ENCODE measurements at regions of chr13 and their contacts with region 1.

Region 1: GRCh38 chr13:110506859-110507566 is 54.5 kb downstream of the RAB20 start:
- DNase-seq: peak; percentile 61 to 78
- H3K4me3 ChIP-seq: no peak overlapping the region
- H3K27ac ChIP-seq: peak overlapping the region; percentile 63 to 69
- H3K4me1 ChIP-seq: peaks cover 0 to 3% of the 10 kb centered on the region in 2 donors
- H3K27me3 ChIP-seq: no peaks in the 10 kb centered on the region
- CTCF ChIP-seq: no peak
- POLR2A ChIP-seq: no peak

Region 2: DNA sequence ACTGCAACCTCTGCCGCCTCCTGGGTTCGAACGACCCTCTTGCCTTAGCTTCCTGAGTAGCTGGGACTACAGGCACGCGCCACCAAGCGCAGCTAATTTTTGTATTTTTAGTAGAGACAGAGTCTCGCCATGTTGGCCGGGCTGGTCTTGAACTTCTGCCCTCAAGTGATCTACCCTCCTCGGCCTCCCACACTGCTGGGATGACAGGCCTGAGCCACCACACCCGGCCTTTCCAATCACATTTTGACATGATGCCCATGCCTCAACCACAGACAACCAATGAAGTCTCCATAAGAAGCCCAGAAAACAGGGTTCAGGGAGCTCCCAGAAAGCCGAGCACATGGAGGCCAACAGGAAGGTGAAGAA is 42.8 kb after region 1 on chr13:
- intact Hi-C with region 1: loop called (anchors 1 kb)
- DNase-seq: no peak
- H3K4me3 ChIP-seq: no peak overlapping the region
- H3K27ac ChIP-seq: no peak overlapping the region
- H3K4me1 ChIP-seq: no peaks in the 10 kb centered on the region
- H3K27me3 ChIP-seq: no peaks in the 10 kb centered on the region
- CTCF ChIP-seq: no peak
- POLR2A ChIP-seq: no peak

Measured in breast epithelium (tissue), 4 donors.